GM12878 (cell line): ENCODE measurements at regions of chr2 and their contacts with region 1.

Region 1: DNA sequence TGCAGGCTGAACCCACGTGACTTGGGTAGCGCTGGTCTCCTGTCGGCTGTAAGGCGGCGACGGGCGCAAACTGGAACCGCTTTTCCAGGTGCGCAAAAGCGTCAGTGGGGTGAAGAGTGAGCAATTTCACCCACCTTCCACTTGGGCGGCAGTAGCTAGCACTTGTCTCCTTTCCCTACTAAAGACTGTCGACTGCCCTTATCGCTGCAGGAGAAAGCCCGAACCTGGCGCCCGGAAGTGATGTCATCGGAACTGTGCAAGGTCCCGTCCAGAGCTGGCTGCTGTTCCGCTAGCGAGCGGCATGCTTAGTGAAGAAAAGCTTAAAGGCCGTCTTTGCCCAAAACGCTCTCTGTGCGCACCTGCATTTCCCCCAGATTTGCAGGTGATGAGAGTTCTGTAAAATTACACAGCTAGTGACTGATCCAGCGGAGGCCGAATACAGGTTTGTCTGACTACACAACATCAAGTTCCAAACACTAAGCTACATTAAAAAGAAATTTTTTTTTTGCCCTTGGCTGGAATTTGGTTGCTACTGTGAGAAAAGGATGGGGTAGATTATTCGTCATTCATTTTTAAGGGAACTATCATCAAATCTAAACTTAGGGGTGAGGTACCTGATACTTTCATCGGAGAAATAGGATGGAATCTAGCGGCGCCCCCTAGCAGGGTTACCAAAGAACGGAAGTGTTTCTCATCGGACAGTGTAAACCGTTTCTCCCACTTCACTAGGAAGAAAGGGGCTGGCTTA is at the start of gene OSGEPL1:
- DNase-seq: peak; percentile 87
- ATAC-seq: peak; percentile 97
- H3K4me3 ChIP-seq: peak within 1 kb of the TSS; percentile 97
- H3K27ac ChIP-seq: peak within 1 kb of the TSS; percentile 91
- H3K4me1 ChIP-seq: peaks cover 5% of the 10 kb centered on the region; the same call in 1 of the 2 replicates
- H3K27me3 ChIP-seq: no peaks in the 10 kb centered on the region
- CTCF ChIP-seq: peak; percentile 50 to 60 (median 53); a peak in 5 of 6 replicates
- EP300 ChIP-seq: no peak
- POLR2A ChIP-seq: peak; percentile 91
- RAD21 ChIP-seq: peak; percentile 16; the same call in 1 of the 2 replicates
- polyA plus RNA-seq, gene OSGEPL1: 9.4 to 11.5 TPM

Region 2: DNA sequence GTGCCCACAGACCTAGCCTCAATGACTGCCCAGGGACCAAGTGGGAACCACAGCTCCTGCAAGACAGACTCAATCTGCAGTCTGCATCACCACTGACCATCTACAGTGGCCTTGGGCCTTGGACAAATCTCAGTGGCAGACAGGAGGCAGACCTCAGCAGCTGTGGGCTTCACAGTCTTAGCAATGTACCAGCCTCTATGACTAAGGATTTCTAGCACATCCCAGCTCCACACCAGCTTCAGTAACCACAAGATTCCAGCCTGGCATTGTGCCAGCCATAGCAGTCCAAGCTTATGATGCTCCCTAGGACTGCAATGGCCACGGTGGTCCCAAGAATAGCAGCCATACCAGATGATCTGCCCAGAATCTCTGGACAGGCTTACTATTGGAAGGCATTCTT is 341.1 kb before region 1 on chr2:
- CTCF ChIA-PET with region 1: no interaction called
- POLR2A ChIA-PET with region 1: no interaction called
- RAD21 ChIA-PET with region 1: no interaction called
- SMC1A ChIA-PET with region 1: no interaction called
- in situ Hi-C with region 1: no loop called
- intact Hi-C with region 1: no loop called
- DNase-seq: no peak
- ATAC-seq: no peak
- H3K4me3 ChIP-seq: no peak overlapping the region
- H3K27ac ChIP-seq: no peak overlapping the region
- H3K4me1 ChIP-seq: no peaks in the 10 kb centered on the region
- H3K27me3 ChIP-seq: no peaks in the 10 kb centered on the region
- CTCF ChIP-seq: no peak
- EP300 ChIP-seq: no peak
- POLR2A ChIP-seq: no peak
- RAD21 ChIP-seq: no peak

Region 3: DNA sequence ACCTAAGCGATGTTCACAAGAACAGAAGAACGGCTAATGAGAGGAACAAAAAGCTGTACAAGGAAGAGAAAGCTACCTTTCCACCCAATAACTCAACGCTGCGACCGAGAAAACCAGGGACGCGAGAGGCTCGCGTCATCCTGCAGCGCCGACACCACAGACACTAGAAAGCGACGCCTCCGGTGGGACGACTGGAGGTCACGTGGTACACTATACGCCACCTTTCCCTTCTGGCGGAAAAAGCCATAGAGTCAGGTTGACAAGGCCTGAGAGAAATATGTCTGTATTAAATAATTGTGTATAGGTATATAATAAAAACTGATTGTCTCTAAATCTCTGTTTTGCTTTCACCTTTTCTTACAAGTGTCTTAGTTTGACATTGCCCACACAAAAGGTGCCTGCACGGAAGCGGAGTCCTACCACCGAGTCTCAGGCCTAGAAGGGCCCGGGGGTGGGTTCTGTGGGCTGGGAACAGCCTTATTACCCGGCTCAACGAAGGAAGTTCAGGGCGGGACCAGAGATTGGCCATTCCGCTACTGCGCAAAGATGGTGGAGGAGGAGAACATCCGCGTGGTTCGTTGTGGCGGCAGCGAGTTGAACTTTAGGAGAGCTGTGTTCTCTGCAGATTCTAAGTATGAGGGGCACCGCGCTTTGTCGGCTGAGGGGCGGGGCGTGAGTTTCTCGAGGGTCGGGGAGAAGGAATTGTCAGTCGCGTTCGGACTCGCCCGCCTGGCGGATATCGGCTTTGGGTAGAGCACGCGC is 321.6 kb before region 1 on chr2 and contains the start of gene WDR75:
- CTCF ChIA-PET with region 1: interaction called, 3 read pairs
- POLR2A ChIA-PET with region 1: interaction called, 7 read pairs
- RAD21 ChIA-PET with region 1: no interaction called
- SMC1A ChIA-PET with region 1: no interaction called
- in situ Hi-C with region 1: no loop called
- intact Hi-C with region 1: loop called (anchors 10 kb)
- DNase-seq: peak; percentile 84
- ATAC-seq: peak; percentile 92
- H3K4me3 ChIP-seq: peak within 1 kb of the TSS; percentile 86
- H3K27ac ChIP-seq: peak within 1 kb of the TSS; percentile 71
- H3K4me1 ChIP-seq: peaks cover 28% of the 10 kb centered on the region
- H3K27me3 ChIP-seq: no peaks in the 10 kb centered on the region
- CTCF ChIP-seq: no peak
- EP300 ChIP-seq: 0 out of 4 replicates have a peak, but pooled peaks of 1 of the 2 experiments have one; percentile 33
- POLR2A ChIP-seq: peak; percentile 98
- RAD21 ChIP-seq: no peak
- polyA plus RNA-seq, gene WDR75: 53.1 to 55.2 TPM

Region 4: GRCh38 chr2:189674374-189675112 is 88.2 kb before region 1 on chr2 and contains the start of gene ANKAR:
- CTCF ChIA-PET with region 1: interaction called, 25 read pairs
- POLR2A ChIA-PET with region 1: interaction called, 6 read pairs
- RAD21 ChIA-PET with region 1: interaction called, 10 read pairs
- SMC1A ChIA-PET with region 1: interaction called, 6 read pairs
- in situ Hi-C with region 1: no loop called
- intact Hi-C with region 1: no loop called
- DNase-seq: peak; percentile 36
- ATAC-seq: peak; percentile 98
- H3K4me3 ChIP-seq: peak within 1 kb of the TSS; percentile 76
- H3K27ac ChIP-seq: peak within 1 kb of the TSS; percentile 93
- H3K4me1 ChIP-seq: peaks cover 3% of the 10 kb centered on the region; the same call in 1 of the 2 replicates
- H3K27me3 ChIP-seq: no peaks in the 10 kb centered on the region
- CTCF ChIP-seq: peak; percentile 76 to 80 (median 76); a peak in 5 of 6 replicates
- EP300 ChIP-seq: no peak
- POLR2A ChIP-seq: peak; percentile 84
- RAD21 ChIP-seq: peak; percentile 40; the same call in 1 of the 2 replicates
- polyA plus RNA-seq, gene ANKAR: 1.3 to 2.9 TPM

Region 5: DNA sequence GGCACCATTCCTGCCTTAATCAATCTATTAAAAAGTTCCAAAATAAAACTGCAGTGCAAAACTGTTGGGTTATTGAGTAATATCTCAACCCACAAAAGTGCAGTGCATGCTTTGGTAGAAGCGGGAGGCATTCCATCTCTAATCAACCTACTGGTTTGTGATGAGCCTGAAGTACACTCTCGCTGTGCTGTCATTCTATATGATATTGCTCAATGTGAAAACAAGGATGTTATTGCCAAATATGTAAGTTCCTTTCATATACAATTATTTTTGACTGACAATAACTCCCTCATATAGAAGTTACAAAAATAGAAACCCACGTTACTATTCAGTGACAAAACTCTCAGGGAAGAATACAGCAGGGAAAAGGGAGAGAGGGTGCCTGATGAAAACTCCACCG is 43.2 kb before region 1 on chr2:
- CTCF ChIA-PET with region 1: no interaction called
- POLR2A ChIA-PET with region 1: no interaction called
- RAD21 ChIA-PET with region 1: no interaction called
- SMC1A ChIA-PET with region 1: no interaction called
- in situ Hi-C with region 1: no loop called
- intact Hi-C with region 1: no loop called
- DNase-seq: no peak
- ATAC-seq: no peak
- H3K4me3 ChIP-seq: no peak overlapping the region
- H3K27ac ChIP-seq: no peak overlapping the region
- H3K4me1 ChIP-seq: no peaks in the 10 kb centered on the region
- H3K27me3 ChIP-seq: no peaks in the 10 kb centered on the region
- CTCF ChIP-seq: no peak
- EP300 ChIP-seq: no peak
- POLR2A ChIP-seq: no peak
- RAD21 ChIP-seq: no peak

Region 6: DNA sequence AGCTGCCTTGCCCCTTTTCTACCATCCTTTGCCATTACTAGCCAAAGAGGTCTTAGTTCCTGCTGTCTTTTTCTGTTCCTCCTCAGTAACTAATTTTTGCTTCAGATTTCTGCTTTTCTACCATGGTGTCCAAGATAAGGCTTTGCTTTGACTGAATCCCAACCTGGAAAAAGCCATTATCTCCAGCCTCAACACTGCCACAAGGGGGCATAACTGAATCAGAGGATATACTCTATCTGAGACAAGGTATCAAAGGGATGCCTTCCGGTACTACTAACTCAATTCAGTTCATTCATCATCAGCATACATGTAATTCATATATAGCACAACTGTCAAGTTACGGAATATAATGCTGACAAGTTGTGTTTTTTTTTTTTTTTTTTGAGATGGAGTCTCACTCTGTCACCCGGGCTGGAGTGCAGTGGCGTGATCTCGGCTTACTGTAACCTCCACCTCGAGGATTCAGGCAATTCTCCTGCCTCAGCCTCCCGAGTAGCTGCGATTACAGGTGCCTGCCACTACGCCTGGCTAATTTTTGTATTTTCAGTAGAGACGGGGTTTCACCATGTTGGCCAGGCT is 11.6 kb before region 1 on chr2:
- CTCF ChIA-PET with region 1: interaction called, 84 read pairs
- POLR2A ChIA-PET with region 1: interaction called, 4 read pairs
- RAD21 ChIA-PET with region 1: interaction called, 4 read pairs
- SMC1A ChIA-PET with region 1: interaction called, 8 read pairs
- in situ Hi-C with region 1: no loop called
- intact Hi-C with region 1: no loop called
- DNase-seq: no peak
- ATAC-seq: peak; percentile 87
- H3K4me3 ChIP-seq: no peak overlapping the region
- H3K27ac ChIP-seq: no peak overlapping the region
- H3K4me1 ChIP-seq: no peaks in the 10 kb centered on the region
- H3K27me3 ChIP-seq: no peaks in the 10 kb centered on the region
- CTCF ChIP-seq: peak; percentile 62 to 74 (median 74); a peak in 5 of 6 replicates
- EP300 ChIP-seq: no peak
- POLR2A ChIP-seq: no peak
- RAD21 ChIP-seq: peak; percentile 63

Region 7: DNA sequence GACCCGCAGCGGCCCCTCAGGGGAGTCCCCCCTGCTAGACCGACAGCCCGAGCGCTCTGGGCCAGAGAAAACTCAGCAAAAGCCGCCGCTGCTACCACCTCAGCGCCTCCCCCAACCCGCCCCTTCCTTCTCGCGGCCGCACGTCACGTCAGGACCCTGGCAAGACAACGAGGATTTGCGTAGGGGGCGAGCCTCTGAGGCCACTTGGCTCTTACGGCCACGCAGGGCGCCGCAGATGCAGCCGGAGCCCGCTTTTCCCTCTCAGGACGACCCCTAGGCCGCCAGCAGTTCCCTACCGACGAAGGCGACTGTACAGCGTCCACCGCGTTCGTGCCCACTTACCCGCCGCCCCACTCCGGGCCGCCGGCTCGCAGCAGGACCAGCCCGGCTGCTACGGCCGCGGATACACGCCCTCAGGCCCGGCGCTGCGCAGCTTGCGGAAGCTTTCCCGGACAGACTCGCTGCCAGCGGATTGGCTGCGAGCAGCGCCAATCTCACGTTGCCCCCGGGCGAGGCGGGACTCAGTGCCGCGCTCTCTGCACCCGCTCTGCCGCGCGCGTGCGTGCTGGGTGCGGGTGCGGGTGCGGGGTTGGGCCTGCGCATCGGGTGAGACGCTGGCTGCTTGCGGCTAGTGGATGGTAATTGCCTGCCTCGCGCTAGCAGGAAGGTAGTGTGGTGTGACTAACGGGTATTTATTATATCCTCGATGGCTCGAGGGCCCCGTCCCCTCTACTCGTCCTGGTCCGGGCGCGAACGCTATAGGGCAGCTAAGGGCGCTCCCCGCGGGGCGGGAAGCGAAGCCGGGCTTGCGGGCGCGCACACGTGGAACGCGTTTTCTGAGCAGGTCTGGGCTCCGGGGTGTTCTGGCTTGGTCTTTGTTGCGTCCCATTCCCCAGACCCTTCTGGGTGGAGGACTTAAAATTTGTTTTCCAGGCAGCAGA is 21.5 kb after region 1 on chr2 and contains the starts of genes ORMDL1 and PMS1:
- CTCF ChIA-PET with region 1: interaction called, 25 read pairs
- POLR2A ChIA-PET with region 1: interaction called, 23 read pairs
- RAD21 ChIA-PET with region 1: interaction called, 8 read pairs
- SMC1A ChIA-PET with region 1: interaction called, 4 read pairs
- in situ Hi-C with region 1: no loop called
- intact Hi-C with region 1: loop called (anchors 1 kb)
- DNase-seq: peak; percentile 86
- ATAC-seq: peak; percentile 95
- H3K4me3 ChIP-seq: peak within 1 kb of the TSS; percentile 86
- H3K27ac ChIP-seq: peak within 1 kb of the TSS; percentile 92
- H3K4me1 ChIP-seq: peaks cover 4% of the 10 kb centered on the region; the same call in 1 of the 2 replicates
- H3K27me3 ChIP-seq: no peaks in the 10 kb centered on the region
- CTCF ChIP-seq: no peak
- EP300 ChIP-seq: 0 out of 4 replicates have a peak, but pooled peaks of 1 of the 2 experiments have one; percentile 27
- POLR2A ChIP-seq: peak; percentile 99
- RAD21 ChIP-seq: no peak
- polyA plus RNA-seq, gene ORMDL1: 68.9 to 89.5 TPM
- polyA plus RNA-seq, gene PMS1: 18.7 to 19.2 TPM

Region 8: GRCh38 chr2:189791338-189792042 is 28.8 kb after region 1 on chr2:
- CTCF ChIA-PET with region 1: interaction called, 25 read pairs
- POLR2A ChIA-PET with region 1: interaction called, 5 read pairs
- RAD21 ChIA-PET with region 1: interaction called, 8 read pairs
- SMC1A ChIA-PET with region 1: interaction called, 4 read pairs
- in situ Hi-C with region 1: no loop called
- intact Hi-C with region 1: no loop called
- DNase-seq: no peak
- ATAC-seq: no peak
- H3K4me3 ChIP-seq: no peak overlapping the region
- H3K27ac ChIP-seq: no peak overlapping the region
- H3K4me1 ChIP-seq: no peaks in the 10 kb centered on the region
- H3K27me3 ChIP-seq: no peaks in the 10 kb centered on the region
- CTCF ChIP-seq: no peak
- EP300 ChIP-seq: no peak
- POLR2A ChIP-seq: no peak
- RAD21 ChIP-seq: no peak

Region 9: DNA sequence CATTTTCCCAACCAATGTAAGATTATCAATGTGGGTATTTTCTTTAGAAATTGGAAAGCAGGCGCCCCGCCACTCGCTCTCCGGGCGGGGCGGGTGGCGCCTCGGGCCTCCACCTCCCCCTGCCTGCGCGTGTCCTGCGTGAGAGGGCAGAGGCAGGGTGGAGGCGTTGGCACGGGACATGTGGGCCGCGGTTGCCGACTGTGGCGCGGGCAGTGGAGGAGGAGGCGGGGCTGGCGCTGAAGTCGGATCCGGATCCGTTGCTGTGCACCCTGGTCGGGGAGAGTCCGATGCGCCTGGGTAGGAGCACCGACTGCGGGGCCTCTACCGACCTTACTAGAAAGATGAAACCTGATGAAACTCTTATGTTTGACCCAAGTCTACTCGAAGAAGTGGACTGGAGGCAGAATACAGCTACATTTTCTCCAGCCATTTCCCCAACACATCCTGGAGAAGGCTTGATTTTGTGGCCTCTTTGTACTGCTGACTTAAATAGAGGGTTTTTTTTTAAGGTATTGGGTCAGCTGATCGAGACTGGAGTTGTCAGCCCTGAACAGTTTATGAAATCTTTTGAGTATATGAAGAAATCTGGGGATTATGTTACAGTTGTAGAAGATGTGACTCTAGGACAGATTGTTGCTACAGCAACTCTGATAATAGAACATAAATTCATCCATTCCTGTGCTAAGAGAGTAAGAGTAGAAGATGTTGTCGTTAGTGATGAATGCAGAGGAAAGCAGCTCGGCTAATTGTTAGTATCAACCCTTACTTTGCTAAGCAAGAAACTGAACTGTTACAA is 59.4 kb after region 1 on chr2:
- CTCF ChIA-PET with region 1: no interaction called
- POLR2A ChIA-PET with region 1: no interaction called
- RAD21 ChIA-PET with region 1: no interaction called
- SMC1A ChIA-PET with region 1: no interaction called
- in situ Hi-C with region 1: no loop called
- intact Hi-C with region 1: no loop called
- DNase-seq: no peak
- ATAC-seq: no peak
- H3K4me3 ChIP-seq: no peak overlapping the region
- H3K27ac ChIP-seq: no peak overlapping the region
- H3K4me1 ChIP-seq: no peaks in the 10 kb centered on the region
- H3K27me3 ChIP-seq: no peaks in the 10 kb centered on the region
- CTCF ChIP-seq: no peak
- EP300 ChIP-seq: no peak
- POLR2A ChIP-seq: no peak
- RAD21 ChIP-seq: no peak

Region 10: DNA sequence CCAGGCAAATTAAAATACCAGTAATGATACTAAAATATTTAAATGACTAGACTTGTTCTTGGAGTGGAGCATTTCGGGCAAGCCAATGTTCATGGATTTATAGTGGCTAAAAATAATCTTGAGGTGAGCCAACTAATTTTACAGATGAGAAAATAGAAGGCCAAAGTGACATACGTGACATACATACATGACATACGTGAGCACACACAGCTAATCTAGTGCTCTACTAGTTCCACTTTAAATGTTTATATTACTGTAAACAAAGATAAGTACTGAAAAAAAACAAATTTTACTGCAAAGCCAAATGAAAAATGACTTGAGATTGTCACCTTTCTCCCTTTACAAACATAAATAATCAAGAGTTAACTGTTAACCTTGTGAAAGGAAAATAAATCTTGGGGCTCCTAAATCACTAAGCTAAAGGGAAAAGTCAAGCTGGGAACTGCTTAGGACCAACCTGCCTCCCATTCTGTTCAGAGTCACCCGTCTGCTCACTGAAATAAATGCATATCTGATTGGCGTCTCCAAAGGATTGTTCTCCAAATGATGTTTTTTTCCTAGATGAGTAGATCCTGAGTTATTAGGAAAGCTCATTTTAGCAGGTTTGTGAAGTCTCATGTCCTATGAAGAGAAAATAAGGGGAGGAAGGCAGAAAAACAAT is 118.2 kb after region 1 on chr2:
- CTCF ChIA-PET with region 1: no interaction called
- POLR2A ChIA-PET with region 1: no interaction called
- RAD21 ChIA-PET with region 1: no interaction called
- SMC1A ChIA-PET with region 1: no interaction called
- in situ Hi-C with region 1: no loop called
- intact Hi-C with region 1: no loop called
- DNase-seq: no peak
- ATAC-seq: no peak
- H3K4me3 ChIP-seq: no peak overlapping the region
- H3K27ac ChIP-seq: no peak overlapping the region
- H3K4me1 ChIP-seq: no peaks in the 10 kb centered on the region
- H3K27me3 ChIP-seq: no peaks in the 10 kb centered on the region
- CTCF ChIP-seq: no peak
- EP300 ChIP-seq: no peak
- POLR2A ChIP-seq: no peak
- RAD21 ChIP-seq: no peak